ENCODE measurements at regions of chr12 and their contacts with region 1.

Region 1: DNA sequence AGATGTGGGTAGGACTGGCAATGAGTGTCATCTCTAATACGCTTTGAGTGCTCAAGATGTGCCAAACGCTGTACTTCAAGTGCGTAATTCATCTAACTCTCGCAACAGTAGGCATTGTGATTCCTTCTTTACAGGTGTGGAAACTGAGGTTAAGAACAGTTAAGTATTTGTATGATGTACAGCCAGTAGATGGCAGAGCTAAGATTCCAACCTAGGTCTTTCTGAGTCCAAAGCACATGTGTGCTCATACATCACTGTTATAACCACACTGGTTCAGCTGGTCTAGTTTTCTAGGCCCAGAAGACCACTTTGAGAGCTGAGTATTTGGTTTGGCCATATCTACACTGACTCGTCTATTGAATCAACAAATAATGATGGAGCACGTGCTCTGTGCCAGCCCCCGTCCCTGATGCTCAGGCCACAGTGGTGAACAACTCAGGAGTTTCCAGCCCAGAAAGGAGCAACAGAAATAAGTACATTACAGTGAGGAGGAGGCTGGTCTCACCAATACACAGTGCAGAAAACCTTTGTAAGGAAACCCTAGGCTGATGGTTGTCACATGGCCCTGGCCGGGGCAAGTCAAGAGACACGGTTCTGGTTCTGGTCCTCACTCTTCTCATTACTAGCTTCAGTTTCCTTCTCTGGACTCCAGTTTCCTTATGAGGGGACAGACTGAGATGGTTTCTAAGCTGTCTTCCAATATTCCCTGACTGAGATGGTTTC is 69.3 kb upstream of the SCN8A start:
- DNase-seq: no peak
- H3K4me3 ChIP-seq: no peak overlapping the region
- H3K27ac ChIP-seq: no peak overlapping the region
- H3K4me1 ChIP-seq: no peaks in the 10 kb centered on the region
- H3K27me3 ChIP-seq: no peaks in the 10 kb centered on the region; a peak in 1 of 7 replicates
- CTCF ChIP-seq: 0 out of 4 replicates have a peak, but pooled peaks of 1 of the 3 experiments have one; percentile 3
- EP300 ChIP-seq: no peak
- POLR2A ChIP-seq: no peak
- RAD21 ChIP-seq: 0 out of 4 replicates have a peak, but pooled peaks of 1 of the 2 experiments have one; percentile 4

Region 2: DNA sequence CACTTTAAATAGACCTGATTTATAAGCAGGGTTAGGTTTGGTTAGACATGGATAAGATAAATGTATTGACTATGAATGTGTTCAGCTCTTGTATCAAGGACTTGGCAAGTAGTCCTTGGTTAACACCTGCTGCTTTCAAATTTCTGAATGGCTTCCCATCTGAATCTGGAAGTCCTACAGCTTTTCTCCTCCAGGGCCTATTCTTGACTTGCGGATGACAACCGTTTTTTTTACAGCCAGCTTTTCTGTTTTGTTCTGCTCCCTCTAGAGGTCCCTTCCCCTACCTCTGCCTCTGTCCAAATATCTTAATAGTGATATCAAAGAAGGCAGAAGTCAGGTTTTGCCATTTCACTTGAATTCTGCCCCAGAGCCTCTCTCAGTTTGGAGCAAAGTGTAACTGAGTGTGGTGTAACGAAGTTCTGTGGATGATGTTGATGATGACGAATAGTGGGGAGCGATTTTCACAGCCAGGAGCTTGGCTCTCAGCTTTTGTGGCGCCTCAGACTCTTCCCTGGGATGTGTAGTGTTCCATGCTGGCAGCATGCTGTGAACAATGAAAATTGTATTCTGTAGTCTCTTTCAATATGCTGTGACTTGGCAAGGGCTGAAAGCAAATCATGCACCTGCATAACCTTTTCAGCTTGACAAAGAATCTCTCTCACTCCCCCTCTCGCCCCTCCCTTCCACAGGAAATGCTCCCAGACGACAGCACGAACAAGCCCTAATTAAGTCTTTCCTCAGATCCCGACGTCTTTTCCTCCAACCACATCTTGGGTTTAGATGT is 102.1 kb before region 1 on chr12:
- CTCF ChIA-PET with region 1: interaction called, 137 read pairs
- POLR2A ChIA-PET with region 1: interaction called, 3 read pairs
- DNase-seq: no peak
- H3K4me3 ChIP-seq: 0 out of 8 replicates have a peak overlapping the region, but pooled peaks of 1 of the 4 experiments have one; percentile 14
- H3K27ac ChIP-seq: no peak overlapping the region
- H3K4me1 ChIP-seq: peaks cover 0 to 12% (median 7%) of the 10 kb centered on the region in 4 experiments; a peak in 4 of 7 replicates
- H3K27me3 ChIP-seq: no peaks in the 10 kb centered on the region
- CTCF ChIP-seq: peak in 2 of 3 experiments; percentile 12 to 38; a peak in 3 of 4 replicates
- EP300 ChIP-seq: no peak
- POLR2A ChIP-seq: no peak
- RAD21 ChIP-seq: 0 out of 4 replicates have a peak, but pooled peaks of 1 of the 2 experiments have one; percentile 5

Region 3: DNA sequence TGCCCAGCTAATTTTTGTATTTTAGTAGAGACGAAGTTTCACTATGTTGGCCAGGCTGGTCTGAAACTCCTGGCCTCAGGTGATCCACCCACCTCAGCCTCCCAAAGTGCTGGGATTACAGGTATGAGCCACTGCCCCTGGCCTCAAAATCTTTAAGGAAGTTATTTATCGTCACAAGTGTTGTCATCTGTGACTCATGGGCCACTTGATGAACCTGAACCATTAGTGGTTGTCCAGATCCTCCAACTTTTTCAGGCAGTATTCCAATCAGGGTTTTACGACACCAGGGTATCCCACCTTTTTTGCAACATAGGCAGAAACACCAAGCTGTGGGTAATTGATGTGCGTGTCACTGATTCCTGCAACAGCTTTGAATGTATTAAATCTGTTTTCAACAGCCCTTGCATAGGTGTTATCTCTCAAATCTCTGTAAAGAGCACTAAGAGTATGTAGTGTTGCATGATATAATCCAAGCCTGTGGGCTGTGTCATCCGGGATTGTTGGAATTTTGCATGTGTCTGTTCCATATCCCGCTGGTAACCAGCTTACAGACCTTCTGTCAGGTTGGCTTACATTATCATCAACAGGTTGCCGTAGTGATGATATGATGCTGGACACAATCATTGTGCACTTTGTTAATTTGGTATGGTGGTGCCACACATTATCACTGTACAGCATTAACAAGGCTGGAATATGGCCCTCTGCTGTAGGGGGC is 10.0 kb before region 1 on chr12:
- CTCF ChIA-PET with region 1: interaction called, 132 read pairs
- POLR2A ChIA-PET with region 1: no interaction called
- DNase-seq: no peak
- H3K4me3 ChIP-seq: no peak overlapping the region
- H3K27ac ChIP-seq: no peak overlapping the region
- H3K4me1 ChIP-seq: no peaks in the 10 kb centered on the region
- H3K27me3 ChIP-seq: no peaks in the 10 kb centered on the region; a peak in 1 of 7 replicates
- CTCF ChIP-seq: no peak
- EP300 ChIP-seq: no peak
- POLR2A ChIP-seq: no peak
- RAD21 ChIP-seq: no peak